Activated naive CD4-positive, alpha-beta T cell treated with anti-CD3 and anti-CD28 coated beads for 36 hours (primary cell): ENCODE measurements at regions of chrX and their contacts with region 1.

Region 1: DNA sequence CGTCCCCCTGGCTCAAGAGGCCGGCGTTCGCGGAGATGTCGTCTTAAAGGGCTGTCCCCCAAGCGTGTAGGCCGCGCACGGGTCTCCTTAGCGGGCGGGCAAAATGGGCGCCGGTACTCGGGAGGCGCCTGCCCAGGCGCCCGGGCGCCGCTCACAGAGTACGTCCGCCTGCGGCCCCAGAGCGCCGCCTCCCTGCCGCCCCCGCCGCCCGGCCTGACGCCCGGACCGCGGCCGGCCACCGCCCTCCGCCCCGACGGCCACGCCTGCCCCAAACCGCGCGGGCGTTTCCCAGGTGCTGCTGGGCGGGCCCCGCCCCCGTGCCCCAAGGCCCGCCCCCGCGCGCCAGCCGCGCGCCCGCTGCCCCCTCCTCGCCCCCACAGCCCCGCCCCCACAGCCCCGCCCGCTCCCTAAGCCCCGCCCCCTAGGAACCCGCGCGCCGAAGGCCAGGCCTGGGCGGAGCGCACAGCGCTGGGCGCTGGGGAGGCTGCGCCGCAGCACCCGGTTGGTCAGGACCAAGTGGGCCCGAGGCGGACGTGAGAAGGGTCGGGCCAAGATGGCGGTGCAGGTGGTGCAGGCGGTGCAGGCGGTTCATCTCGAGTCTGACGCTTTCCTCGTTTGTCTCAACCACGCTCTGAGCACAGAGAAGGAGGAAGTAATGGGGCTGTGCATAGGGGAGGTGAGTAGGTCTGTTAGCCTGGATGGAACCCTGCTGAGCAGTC is at the starts of genes BRCC3, CMC4 and MTCP1:
- DNase-seq: peak; percentile 79
- H3K4me3 Mint-ChIP-seq: peak within 1 kb of the TSS; percentile 89
- H3K27ac Mint-ChIP-seq: peak within 1 kb of the TSS; percentile 84
- H3K4me1 Mint-ChIP-seq: peaks cover 43% of the 10 kb centered on the region
- H3K27me3 Mint-ChIP-seq: no peaks in the 10 kb centered on the region
- total RNA-seq, gene BRCC3: 15.4 to 17.9 TPM
- total RNA-seq, gene CMC4: 5.8 to 7.7 TPM
- total RNA-seq, gene MTCP1: 15.0 to 19.3 TPM

Region 2: DNA sequence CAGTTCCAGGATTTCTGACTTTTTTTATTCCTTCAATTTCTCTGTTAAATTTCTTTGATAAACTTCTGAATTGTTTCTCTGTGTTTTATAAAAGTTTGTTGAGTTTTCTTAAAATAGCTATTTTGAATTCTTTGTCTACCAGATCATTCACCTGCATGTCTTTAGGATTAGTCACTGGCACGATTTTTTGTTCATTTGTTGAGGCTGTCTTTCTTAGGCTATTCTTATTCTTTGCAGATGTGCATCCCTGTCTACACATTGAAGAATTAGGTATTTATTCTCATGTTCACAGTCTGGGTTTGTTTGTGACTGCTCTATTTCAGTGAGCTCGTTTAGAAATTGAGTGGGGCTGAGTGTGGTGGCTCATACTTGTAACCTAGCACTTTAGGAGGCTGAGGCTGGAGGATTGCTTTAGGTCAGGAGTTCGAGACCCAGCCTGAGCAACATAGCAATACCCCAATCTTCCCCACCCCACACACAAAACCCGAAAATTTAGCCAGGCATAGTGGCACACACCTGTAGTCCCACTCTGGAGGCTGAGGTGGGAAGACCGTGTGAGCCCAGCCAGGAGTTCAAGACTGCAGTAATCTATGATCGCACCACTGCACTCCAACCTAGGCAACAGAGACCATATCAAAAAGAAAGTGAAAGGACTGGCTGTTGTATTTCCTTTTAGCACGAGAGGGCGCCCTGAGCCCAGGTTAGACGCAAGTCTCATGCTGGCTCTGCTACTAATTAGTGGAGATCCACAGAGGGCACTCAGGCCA is 90.6 kb before region 1 on chrX:
- CTCF ChIA-PET with region 1: no interaction called
- intact Hi-C with region 1: loop called (anchors 5 kb)
- DNase-seq: peak; percentile 87
- H3K4me3 Mint-ChIP-seq: peak overlapping the region; percentile 79
- H3K27ac Mint-ChIP-seq: no peak overlapping the region
- H3K4me1 Mint-ChIP-seq: peaks cover 8% of the 10 kb centered on the region
- H3K27me3 Mint-ChIP-seq: no peaks in the 10 kb centered on the region

Region 3: GRCh38 chrX:155026726-155027508 is 44.2 kb before region 1 on chrX and contains the start of gene FUNDC2:
- CTCF ChIA-PET with region 1: no interaction called
- intact Hi-C with region 1: loop called (anchors 1 kb)
- DNase-seq: peak; percentile 92
- H3K4me3 Mint-ChIP-seq: peak within 1 kb of the TSS; percentile 86
- H3K27ac Mint-ChIP-seq: peak within 1 kb of the TSS; percentile 93
- H3K4me1 Mint-ChIP-seq: peaks cover 23% of the 10 kb centered on the region
- H3K27me3 Mint-ChIP-seq: no peaks in the 10 kb centered on the region
- total RNA-seq, gene FUNDC2: 94.3 to 95.5 TPM

Region 4: GRCh38 chrX:155086202-155086840 is 15.2 kb after region 1 on chrX:
- CTCF ChIA-PET with region 1: interaction called, 15 read pairs
- intact Hi-C with region 1: no loop called
- DNase-seq: peak; percentile 51
- H3K4me3 Mint-ChIP-seq: no peak overlapping the region
- H3K27ac Mint-ChIP-seq: no peak overlapping the region
- H3K4me1 Mint-ChIP-seq: no peaks in the 10 kb centered on the region
- H3K27me3 Mint-ChIP-seq: no peaks in the 10 kb centered on the region

Region 5: GRCh38 chrX:155112171-155112570 is 41.0 kb after region 1 on chrX:
- CTCF ChIA-PET with region 1: no interaction called
- intact Hi-C with region 1: loop called (anchors 1 kb)
- DNase-seq: no peak
- H3K4me3 Mint-ChIP-seq: no peak overlapping the region
- H3K27ac Mint-ChIP-seq: no peak overlapping the region
- H3K4me1 Mint-ChIP-seq: peaks cover 15% of the 10 kb centered on the region
- H3K27me3 Mint-ChIP-seq: no peaks in the 10 kb centered on the region

Region 6: DNA sequence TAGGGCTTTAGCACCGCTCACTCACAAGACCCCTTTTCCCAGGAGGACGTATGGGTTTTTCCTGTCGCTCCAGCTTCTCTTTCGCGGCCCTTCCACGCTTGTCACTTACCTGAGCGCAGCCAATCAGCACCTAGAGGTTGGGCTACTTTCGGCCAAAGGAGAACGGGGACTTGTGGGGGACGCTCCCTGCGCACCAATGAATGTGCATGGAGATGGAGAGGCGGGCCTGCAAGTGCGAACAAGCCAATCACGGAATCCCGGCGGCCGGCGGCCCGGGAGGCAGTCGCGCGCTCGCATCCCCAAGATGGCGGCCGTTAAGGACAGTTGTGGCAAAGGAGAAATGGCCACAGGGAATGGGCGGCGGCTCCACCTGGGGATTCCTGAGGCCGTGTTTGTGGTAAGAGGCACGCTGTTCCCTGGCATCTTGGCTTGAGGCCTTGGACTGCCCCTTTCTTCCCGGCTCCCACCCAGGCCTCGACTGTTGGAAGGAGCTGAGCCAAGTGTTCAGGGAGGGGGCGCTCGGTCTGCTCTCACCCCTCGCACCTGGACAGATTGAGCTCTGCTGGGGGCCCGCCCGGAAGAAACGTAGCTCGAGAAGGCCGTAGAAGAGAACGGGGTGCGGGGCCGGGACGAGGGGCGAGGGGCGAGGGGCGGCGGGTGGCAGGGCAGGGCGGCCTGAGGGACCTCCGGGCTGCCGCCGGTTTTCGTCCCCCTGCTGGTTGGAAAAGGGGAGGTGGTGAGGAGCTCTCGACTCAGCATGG is 145.2 kb after region 1 on chrX and contains the start of gene VBP1:
- CTCF ChIA-PET with region 1: no interaction called
- intact Hi-C with region 1: loop called (anchors 2 kb)
- DNase-seq: peak; percentile 93
- H3K4me3 Mint-ChIP-seq: peak within 1 kb of the TSS; percentile 96
- H3K27ac Mint-ChIP-seq: peak within 1 kb of the TSS; percentile 88
- H3K4me1 Mint-ChIP-seq: peaks cover 15% of the 10 kb centered on the region
- H3K27me3 Mint-ChIP-seq: no peaks in the 10 kb centered on the region
- total RNA-seq, gene VBP1: 106 to 110 TPM

Region 7: GRCh38 chrX:155767051-155767875 is 696.1 kb after region 1 on chrX:
- CTCF ChIA-PET with region 1: no interaction called
- intact Hi-C with region 1: loop called (anchors 2 kb)
- DNase-seq: peak; percentile 61
- H3K4me3 Mint-ChIP-seq: peak overlapping the region; percentile 77
- H3K27ac Mint-ChIP-seq: no peak overlapping the region
- H3K4me1 Mint-ChIP-seq: peaks cover 2% of the 10 kb centered on the region
- H3K27me3 Mint-ChIP-seq: no peaks in the 10 kb centered on the region